Activated CD4-positive, alpha-beta memory T cell treated with anti-CD3 and anti-CD28 coated beads for 36 hours (primary cell): ENCODE measurements at regions of chr5 and their contacts with region 1.

Region 1: GRCh38 chr5:180315762-180316212 is 23.9 kb upstream of the MAPK9 start:
- DNase-seq: peak; percentile 82
- H3K4me3 Mint-ChIP-seq: peak overlapping the region; percentile 20
- H3K27ac Mint-ChIP-seq: peak overlapping the region; percentile 18
- H3K4me1 Mint-ChIP-seq: peaks cover 2% of the 10 kb centered on the region
- H3K27me3 Mint-ChIP-seq: no peaks in the 10 kb centered on the region

Region 2: GRCh38 chr5:180304431-180305375 is 11.1 kb before region 1 on chr5:
- CTCF ChIA-PET with region 1: interaction called, 35 read pairs
- POLR2A ChIA-PET with region 1: no interaction called
- intact Hi-C with region 1: no loop called
- DNase-seq: no peak
- H3K4me3 Mint-ChIP-seq: no peak overlapping the region
- H3K27ac Mint-ChIP-seq: no peak overlapping the region
- H3K4me1 Mint-ChIP-seq: no peaks in the 10 kb centered on the region
- H3K27me3 Mint-ChIP-seq: no peaks in the 10 kb centered on the region